Left lung (tissue), 14 donors: ENCODE measurements at regions of chr2 and their contacts with region 1.

Region 1: DNA sequence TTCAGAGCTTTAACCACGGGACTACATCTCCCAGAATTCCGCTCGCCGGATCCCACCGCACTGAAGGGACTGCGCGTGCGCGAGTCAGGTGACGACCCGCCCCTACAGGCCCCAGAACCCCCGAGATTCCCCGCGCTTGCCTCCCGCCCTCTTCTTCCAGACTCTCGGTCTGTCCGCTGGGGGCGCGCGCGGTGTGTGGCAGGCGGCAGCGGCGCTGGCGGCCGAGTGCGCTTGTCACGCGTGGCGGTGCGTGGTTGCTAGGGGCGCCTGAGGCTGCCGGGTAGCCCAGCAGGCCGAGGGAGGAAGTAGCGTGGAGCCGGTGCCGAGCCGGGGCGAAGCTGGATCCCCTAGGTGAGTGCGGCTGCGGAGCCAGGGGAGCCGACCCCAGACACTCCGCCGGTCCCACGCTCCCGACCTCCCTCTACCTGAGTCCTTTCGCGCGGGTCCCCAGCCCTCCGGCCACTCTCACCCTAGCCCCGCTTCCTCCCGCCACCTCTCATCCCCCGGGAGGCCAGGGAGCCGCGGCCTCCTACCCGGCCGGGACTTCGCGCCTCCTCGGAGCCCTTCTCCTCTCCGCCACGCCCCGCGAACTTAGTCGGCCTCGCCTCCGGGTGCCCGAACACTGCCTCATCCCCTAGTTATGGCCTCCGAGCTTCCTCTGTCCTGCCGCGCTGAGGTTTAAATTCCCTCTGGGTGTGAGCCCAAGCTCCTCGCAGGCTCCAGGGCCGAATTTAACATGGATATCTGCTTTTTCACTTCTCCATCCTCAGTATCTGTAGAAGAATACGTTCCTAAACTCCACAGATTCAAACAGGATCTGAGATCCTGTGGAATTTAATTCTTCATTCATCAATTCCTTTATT is at the start of gene TTLL4:
- DNase-seq: peak; percentile 94 to 100 (median 98)
- ATAC-seq: peak; percentile 99
- H3K4me3 ChIP-seq: peak within 1 kb of the TSS; percentile 94 to 95
- H3K27ac ChIP-seq: peak within 1 kb of the TSS; percentile 93 to 96
- H3K4me1 ChIP-seq: peaks cover 8 to 43% of the 10 kb centered on the region in 2 donors
- H3K27me3 ChIP-seq: no peaks in the 10 kb centered on the region
- CTCF ChIP-seq: peak; percentile 67 to 94
- polyA plus RNA-seq, gene TTLL4: 34.0 to 52.0 (median 43.0) TPM

Region 2: GRCh38 chr2:218849721-218850120 is 138.8 kb after region 1 on chr2:
- intact Hi-C with region 1: loop called in 1 of 2 experiments (anchors 10 kb)
- DNase-seq: no peak
- ATAC-seq: no peak
- H3K4me3 ChIP-seq: no peak overlapping the region
- H3K27ac ChIP-seq: no peak overlapping the region
- H3K4me1 ChIP-seq: peaks cover 0 to 6% of the 10 kb centered on the region in 2 donors
- H3K27me3 ChIP-seq: peaks cover 10 to 69% of the 10 kb centered on the region in 2 donors
- CTCF ChIP-seq: no peak